Caco-2 (cell line): ENCODE measurements at regions of chr5 and their contacts with region 1.

Region 1: DNA sequence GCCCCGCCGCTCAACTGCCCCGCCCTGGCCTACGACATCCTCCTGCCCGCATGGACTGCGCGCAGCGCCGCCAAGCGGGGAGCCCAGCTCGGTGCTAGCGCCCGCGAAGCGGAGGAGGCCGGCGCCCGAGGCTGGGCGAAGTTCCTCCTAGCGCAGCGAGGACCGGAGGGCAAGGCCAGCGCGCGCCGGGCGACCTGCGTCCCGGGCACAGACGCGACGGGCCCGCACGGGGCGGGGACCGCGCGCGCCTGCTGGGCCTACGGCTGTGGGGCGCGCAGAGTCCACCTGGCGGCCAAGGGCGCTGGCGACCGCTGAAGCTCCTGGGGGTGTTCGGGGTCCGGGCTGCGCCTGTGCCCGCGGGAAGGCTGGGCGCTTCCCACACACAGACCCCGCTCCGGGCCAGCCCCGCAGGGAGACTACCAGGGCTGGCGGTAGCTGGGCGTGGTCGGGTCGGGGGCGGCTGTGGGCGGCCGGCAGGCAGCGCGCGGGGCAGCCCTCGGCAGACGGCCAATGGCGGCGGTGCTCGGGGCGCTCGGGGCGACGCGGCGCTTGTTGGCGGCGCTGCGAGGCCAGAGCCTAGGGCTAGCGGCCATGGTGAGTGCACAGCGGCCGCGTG is at the start of gene PCBD2:
- DNase-seq: peak; percentile 93 to 98
- H3K4me3 ChIP-seq: peak within 1 kb of the TSS; percentile 94
- H3K4me3 Mint-ChIP-seq: peak within 1 kb of the TSS; percentile 83
- H3K27ac Mint-ChIP-seq: peak within 1 kb of the TSS; percentile 90
- H3K4me1 ChIP-seq: no peaks in the 10 kb centered on the region
- H3K4me1 Mint-ChIP-seq: no peaks in the 10 kb centered on the region
- H3K27me3 ChIP-seq: no peaks in the 10 kb centered on the region
- H3K27me3 Mint-ChIP-seq: no peaks in the 10 kb centered on the region
- CTCF ChIP-seq: peak; percentile 93 to 95
- total RNA-seq, gene PCBD2: 20.8 and 24.2 TPM in 2 replicates

Region 2: DNA sequence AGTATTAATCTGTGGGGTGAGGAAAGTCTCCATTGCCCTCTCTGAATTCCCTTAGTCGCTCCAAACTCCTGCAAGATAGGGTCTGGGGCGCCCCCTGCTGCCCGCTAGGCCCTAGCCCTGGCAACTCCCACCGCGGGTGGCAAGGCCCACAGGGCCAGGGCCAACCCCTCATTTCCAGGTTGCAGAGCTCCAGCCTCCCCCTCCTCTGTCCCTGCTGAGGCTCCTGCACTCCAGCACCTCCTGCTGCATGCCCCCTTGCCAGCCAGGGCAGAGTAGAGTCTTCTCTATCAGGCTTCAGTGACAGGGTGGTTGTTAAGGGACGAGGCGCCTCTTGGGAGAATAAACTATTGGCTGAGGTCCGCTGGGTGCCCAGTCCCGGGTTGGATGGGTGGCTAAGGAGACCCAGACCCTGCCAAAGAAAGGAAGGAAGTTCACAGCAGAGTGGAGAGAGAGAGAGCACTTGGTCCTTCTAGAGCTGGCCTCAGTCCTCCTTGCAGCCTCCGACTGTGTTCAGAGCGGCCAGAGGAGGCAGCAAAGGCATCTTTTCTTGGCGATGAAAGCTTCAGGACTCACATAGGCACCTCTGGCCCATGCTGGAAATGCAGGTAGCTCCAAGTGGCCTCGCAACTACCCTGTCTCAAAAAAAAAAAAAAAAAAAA is 317.7 kb before region 1 on chr5:
- CTCF ChIA-PET with region 1: interaction called, 6 read pairs
- POLR2A ChIA-PET with region 1: no interaction called
- intact Hi-C with region 1: loop called (anchors 2 kb)
- DNase-seq: peak; percentile 85 to 86
- H3K4me3 ChIP-seq: no peak overlapping the region
- H3K4me3 Mint-ChIP-seq: no peak overlapping the region
- H3K27ac Mint-ChIP-seq: no peak overlapping the region
- H3K4me1 ChIP-seq: peaks cover 11% of the 10 kb centered on the region
- H3K4me1 Mint-ChIP-seq: peaks cover 5% of the 10 kb centered on the region
- H3K27me3 ChIP-seq: no peaks in the 10 kb centered on the region
- H3K27me3 Mint-ChIP-seq: no peaks in the 10 kb centered on the region
- CTCF ChIP-seq: peak; percentile 59 to 85

Region 3: GRCh38 chr5:134803821-134804220 is 100.9 kb before region 1 on chr5:
- CTCF ChIA-PET with region 1: no interaction called
- POLR2A ChIA-PET with region 1: no interaction called
- intact Hi-C with region 1: loop called (anchors 10 kb)
- DNase-seq: no peak
- H3K4me3 ChIP-seq: no peak overlapping the region
- H3K4me3 Mint-ChIP-seq: no peak overlapping the region
- H3K27ac Mint-ChIP-seq: no peak overlapping the region
- H3K4me1 ChIP-seq: no peaks in the 10 kb centered on the region
- H3K4me1 Mint-ChIP-seq: no peaks in the 10 kb centered on the region
- H3K27me3 ChIP-seq: no peaks in the 10 kb centered on the region
- H3K27me3 Mint-ChIP-seq: no peaks in the 10 kb centered on the region
- CTCF ChIP-seq: no peak

Region 4: GRCh38 chr5:134845852-134846640 is 58.7 kb before region 1 on chr5 and contains the start of gene C5orf24:
- CTCF ChIA-PET with region 1: interaction called, 4 read pairs
- POLR2A ChIA-PET with region 1: interaction called, 12 read pairs
- intact Hi-C with region 1: loop called (anchors 2 kb)
- DNase-seq: peak; percentile 93 to 94
- H3K4me3 ChIP-seq: peak within 1 kb of the TSS; percentile 96
- H3K4me3 Mint-ChIP-seq: peak within 1 kb of the TSS; percentile 97
- H3K27ac Mint-ChIP-seq: peak within 1 kb of the TSS; percentile 97
- H3K4me1 ChIP-seq: peaks cover 13% of the 10 kb centered on the region; the same call in 1 of the 2 replicates
- H3K4me1 Mint-ChIP-seq: peaks cover 6% of the 10 kb centered on the region
- H3K27me3 ChIP-seq: no peaks in the 10 kb centered on the region
- H3K27me3 Mint-ChIP-seq: no peaks in the 10 kb centered on the region
- CTCF ChIP-seq: no peak
- total RNA-seq, gene C5orf24: 41.2 and 48.7 TPM in 2 replicates

Region 5: DNA sequence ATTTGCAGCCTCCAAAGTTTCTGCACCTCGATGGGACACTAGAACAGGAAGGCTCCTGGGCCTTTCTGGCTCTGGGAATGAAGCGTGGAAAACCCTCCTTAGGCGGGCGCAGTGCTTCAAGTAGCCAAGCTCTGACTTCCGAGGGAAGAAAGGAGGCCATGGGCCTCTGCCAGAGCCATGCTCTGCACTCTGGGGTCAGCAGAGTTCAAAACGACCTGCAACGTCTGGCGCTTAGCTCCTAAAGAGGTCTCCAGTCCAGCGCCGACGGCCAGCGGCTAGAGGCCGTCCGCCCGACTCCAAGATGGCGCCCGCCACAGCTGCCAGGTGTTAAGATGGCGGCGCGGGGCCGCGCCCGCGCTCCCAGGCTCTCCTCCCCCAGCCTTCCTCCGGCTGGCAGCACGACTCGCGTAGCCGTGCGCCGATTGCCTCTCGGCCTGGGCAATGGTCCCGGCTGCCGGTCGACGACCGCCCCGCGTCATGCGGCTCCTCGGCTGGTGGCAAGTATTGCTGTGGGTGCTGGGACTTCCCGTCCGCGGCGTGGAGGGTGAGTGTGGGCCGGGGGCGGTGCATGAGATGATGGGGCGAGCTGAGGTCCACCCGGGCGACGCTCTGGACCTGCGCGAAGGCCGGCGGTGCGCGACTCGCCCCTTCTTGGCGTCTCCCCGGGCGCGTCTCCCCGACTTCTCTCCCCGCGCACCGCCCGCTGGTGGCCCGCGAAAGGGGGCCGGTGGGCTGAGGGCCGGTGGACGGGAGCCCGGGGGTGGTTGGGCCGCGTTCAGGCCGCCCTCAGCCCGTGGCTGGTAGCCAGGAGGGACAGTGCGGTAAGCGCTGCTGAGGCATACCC is 30.5 kb before region 1 on chr5 and contains the start of gene TXNDC15:
- CTCF ChIA-PET with region 1: interaction called, 11 read pairs
- POLR2A ChIA-PET with region 1: interaction called, 5 read pairs
- intact Hi-C with region 1: loop called (anchors 1 kb)
- DNase-seq: peak; percentile 83 to 89
- H3K4me3 ChIP-seq: peak within 1 kb of the TSS; percentile 88
- H3K4me3 Mint-ChIP-seq: peak within 1 kb of the TSS; percentile 93
- H3K27ac Mint-ChIP-seq: peak within 1 kb of the TSS; percentile 90
- H3K4me1 ChIP-seq: no peaks in the 10 kb centered on the region; the same call in 1 of the 2 replicates
- H3K4me1 Mint-ChIP-seq: peaks cover 6% of the 10 kb centered on the region
- H3K27me3 ChIP-seq: no peaks in the 10 kb centered on the region
- H3K27me3 Mint-ChIP-seq: no peaks in the 10 kb centered on the region
- CTCF ChIP-seq: no peak
- total RNA-seq, gene TXNDC15: 31.4 and 39.6 TPM in 2 replicates

Region 6: DNA sequence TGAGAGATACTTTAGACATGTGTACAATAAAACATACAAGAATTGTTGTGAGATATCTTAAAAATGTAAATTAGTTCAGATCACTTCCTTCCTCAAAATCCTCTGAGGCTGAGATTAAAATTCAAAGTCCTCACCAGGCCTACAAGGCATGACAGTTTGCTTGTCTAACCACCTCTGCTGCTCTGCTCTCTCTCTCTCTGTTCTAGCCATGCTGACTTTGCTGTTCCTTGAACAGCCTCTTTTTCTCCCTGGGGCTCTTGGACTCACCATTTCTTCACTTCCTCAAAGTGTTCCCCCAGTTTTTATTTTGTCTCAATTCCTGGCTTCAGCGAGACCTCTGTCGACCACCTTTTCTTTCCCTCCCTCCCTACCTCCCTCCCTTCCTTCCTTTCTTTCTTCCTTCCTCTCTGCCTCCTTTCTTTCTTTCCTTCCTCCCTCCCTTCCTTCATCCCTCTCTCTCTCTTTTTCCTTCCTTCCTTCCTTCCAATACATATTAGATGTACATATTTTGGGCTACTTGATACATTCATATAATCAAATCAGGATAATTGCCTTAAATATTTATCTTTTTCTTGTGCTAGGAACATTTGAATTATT is 89.9 kb after region 1 on chr5:
- CTCF ChIA-PET with region 1: no interaction called
- POLR2A ChIA-PET with region 1: no interaction called
- intact Hi-C with region 1: no loop called
- DNase-seq: no peak
- H3K4me3 ChIP-seq: no peak overlapping the region
- H3K4me3 Mint-ChIP-seq: no peak overlapping the region
- H3K27ac Mint-ChIP-seq: no peak overlapping the region
- H3K4me1 ChIP-seq: no peaks in the 10 kb centered on the region
- H3K4me1 Mint-ChIP-seq: no peaks in the 10 kb centered on the region
- H3K27me3 ChIP-seq: no peaks in the 10 kb centered on the region
- H3K27me3 Mint-ChIP-seq: no peaks in the 10 kb centered on the region
- CTCF ChIP-seq: no peak

Region 7: DNA sequence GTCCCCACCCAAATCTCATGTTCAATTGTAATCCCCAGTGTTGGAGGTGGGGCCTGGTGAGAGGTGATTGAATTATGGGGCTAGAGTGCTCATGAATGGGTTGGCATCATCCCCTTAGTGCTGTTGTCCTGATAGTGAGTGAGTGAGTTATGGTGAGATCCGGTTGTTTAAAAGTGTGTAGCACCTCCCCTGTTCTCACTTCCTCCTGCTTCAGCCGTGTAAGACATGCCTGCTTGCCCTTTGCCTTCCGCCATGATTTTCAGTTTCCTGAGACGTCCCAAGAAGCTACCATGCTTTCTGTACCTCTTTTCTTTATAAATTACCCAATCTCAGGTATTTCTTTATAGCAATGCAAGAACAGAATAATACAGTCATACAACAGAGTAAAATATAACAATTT is 1050.8 kb after region 1 on chr5:
- CTCF ChIA-PET with region 1: no interaction called
- POLR2A ChIA-PET with region 1: no interaction called
- intact Hi-C with region 1: no loop called
- DNase-seq: no peak
- H3K4me3 ChIP-seq: no peak overlapping the region
- H3K4me3 Mint-ChIP-seq: no peak overlapping the region
- H3K27ac Mint-ChIP-seq: no peak overlapping the region
- H3K4me1 ChIP-seq: peaks cover 20% of the 10 kb centered on the region
- H3K4me1 Mint-ChIP-seq: peaks cover 16% of the 10 kb centered on the region
- H3K27me3 ChIP-seq: no peaks in the 10 kb centered on the region
- H3K27me3 Mint-ChIP-seq: no peaks in the 10 kb centered on the region
- CTCF ChIP-seq: no peak